GM10248 (cell line): ENCODE measurements at regions of chr12 and their contacts with region 1.

Region 1: GRCh38 chr12:112375105-112375504 is 7.1 kb downstream of the HECTD4 start:
- DNase-seq: no peak
- CTCF ChIP-seq: no peak

Region 2: GRCh38 chr12:112353389-112353788 is 21.7 kb before region 1 on chr12:
- CTCF ChIA-PET with region 1: interaction called, 11 read pairs
- POLR2A ChIA-PET with region 1: interaction called, 5 read pairs
- DNase-seq: no peak
- CTCF ChIP-seq: no peak

Region 3: DNA sequence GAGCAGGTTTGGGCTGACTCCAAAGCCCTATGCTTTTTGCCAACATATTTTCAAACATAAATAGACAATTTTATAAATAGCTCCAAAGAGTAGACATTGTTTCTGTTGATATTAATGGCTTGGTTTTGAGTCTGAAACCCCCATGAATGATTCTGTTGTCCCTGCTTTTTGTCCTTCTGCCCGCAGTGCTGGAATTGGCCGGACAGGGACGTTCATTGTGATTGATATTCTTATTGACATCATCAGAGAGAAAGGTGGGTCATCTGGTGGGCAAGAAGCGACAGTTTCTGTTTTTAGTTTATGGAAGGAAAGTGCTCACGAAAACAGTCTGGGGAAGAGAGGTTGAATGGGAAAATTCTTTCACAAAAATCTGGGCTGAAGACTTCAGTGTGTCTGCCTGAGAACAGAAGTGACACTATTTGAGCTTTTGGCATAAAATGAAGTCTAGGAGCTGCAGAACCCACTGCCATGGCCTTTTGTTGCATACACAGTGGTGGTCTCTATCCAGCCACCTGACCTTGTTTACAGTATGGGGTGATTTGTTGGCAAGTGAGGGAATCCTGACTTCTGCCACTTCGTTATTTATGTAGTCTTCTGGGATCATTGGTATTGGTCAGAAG is 113.3 kb after region 1 on chr12:
- CTCF ChIA-PET with region 1: no interaction called
- POLR2A ChIA-PET with region 1: no interaction called
- DNase-seq: no peak
- CTCF ChIP-seq: no peak